Astrocyte of the cerebellum (primary cell): ENCODE measurements at regions of chr5 and their contacts with region 1.

Region 1: DNA sequence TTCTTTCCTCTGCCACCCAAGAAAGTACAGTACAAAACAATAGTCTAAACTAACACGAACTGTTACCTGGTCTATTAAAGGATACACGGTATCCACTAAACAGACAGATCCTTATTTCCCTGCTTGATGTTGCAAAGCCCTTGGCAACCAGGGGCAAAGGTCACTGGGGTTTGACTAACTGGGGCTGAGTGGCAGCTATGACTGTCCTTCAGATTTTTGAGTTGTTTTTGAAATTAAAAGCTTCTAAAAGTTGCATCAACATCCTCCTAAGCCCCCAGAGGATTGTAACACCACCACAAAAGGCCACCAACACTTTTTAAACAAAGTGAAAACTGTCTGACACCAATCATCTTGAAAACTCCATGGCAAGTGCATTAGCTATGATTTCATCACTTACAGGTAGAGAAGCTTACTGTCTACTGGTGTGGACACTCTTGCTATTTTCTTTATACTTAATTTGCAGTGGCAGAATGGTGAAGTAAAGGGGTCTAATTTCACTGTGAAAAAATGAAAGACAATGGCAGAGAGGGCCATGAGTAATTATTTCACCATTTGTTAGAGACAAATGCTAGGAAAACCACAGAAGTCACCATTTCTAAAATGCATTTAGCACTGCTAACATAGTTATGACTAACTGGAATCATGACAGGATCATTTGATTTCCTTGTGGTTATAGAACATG is 292.4 kb downstream of the EFNA5 start:
- DNase-seq: no peak
- H3K4me3 ChIP-seq: no peak overlapping the region
- CTCF ChIP-seq: no peak

Region 2: GRCh38 chr5:107289030-107289714 is 89.2 kb before region 1 on chr5:
- in situ Hi-C with region 1: no loop called
- DNase-seq: no peak
- H3K4me3 ChIP-seq: no peak overlapping the region
- CTCF ChIP-seq: no peak

Region 3: DNA sequence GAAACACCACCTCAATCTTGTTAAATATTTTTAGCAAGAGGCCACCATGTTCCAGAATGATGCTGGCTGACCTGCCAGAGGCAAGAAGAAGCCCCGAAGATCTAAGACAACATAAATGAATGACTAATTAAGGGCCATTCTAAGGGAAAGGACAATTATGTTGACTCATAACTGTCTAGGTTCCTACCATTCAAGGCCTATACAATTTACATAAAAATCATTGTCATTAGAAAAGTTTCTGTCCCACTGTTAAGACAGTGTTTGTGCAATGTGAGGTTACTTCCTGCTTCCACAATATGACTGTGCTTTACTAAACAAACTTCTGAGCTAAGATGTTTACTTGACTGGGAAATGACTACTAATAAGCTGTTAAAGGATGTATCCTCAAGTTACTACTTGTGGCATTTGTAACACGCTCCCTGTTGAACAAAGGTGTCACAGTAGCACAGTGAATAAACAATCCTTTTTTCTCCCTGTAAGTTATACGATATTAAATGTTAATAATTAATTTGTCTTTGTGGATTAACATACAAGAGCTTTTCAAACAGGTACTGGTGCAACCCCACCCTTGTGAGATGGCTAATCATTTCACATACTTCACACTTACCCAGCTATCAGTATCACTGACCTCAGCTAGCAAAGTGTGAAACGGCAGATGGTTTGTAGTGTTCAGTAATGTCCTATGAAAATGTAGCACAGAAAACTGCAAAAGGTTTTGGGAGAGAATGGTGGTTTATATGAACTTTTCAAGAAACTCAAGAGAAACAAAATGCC is 96.5 kb after region 1 on chr5:
- in situ Hi-C with region 1: loop called (anchors 5 kb)
- DNase-seq: no peak
- H3K4me3 ChIP-seq: no peak overlapping the region
- CTCF ChIP-seq: no peak